H1 (cell line): ENCODE measurements at regions of chr1 and their contacts with region 1.

Region 1: GRCh38 chr1:108691942-108692723 is at the start of gene PRPF38B:
- DNase-seq: peak; percentile 78 to 91
- H3K4me3 ChIP-seq: peak within 1 kb of the TSS; percentile 72 to 99 (median 96)
- H3K27ac ChIP-seq: peak within 1 kb of the TSS; percentile 96
- H3K4me1 ChIP-seq: peaks cover 0 to 2% (median 0%) of the 10 kb centered on the region in 4 experiments; a peak in 1 of 7 replicates
- H3K27me3 ChIP-seq: no peaks in the 10 kb centered on the region; a peak in 1 of 7 replicates
- CTCF ChIP-seq: no peak
- EP300 ChIP-seq: no peak; a peak in 1 of 3 replicates
- POLR2A ChIP-seq: peak; percentile 97 to 99
- RAD21 ChIP-seq: peak in 1 of 2 experiments; percentile 13; a peak in 2 of 4 replicates
- total RNA-seq, gene PRPF38B: 46.4 and 50.6 TPM in 2 replicates

Region 2: DNA sequence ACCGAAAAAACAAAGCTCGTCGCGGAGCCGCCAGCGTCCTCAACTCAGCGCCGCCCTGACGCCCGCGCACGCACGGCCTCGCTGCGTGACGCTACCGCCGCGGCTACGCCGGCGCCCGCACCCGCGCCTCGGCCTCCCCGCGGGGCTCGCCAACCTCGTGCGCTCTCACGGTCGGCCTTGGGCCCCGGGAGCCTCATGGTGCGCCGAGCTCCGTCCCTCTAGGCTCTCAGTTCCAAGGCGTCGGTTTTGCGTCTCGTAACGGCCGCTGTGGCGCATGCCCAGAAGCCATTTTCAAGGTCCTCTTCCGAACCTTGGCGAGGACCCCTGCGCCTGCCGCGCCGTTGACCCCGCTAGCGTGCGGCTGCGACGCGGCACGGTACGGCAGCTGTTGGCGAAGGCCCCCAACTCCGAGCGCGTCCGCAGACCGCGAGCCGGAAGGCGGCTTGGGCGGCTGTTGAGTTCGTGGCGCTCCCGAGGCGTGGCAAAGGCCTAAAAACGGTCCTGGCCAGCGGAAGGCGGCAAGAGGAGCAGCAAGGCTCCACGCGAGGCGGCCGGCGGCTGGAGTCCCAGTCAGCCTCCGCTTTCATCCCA is 31.0 kb before region 1 on chr1 and contains the start of gene HENMT1:
- CTCF ChIA-PET with region 1: no interaction called
- POLR2A ChIA-PET with region 1: interaction called, 33 read pairs
- DNase-seq: peak; percentile 27 to 77
- H3K4me3 ChIP-seq: peak within 1 kb of the TSS; percentile 34 to 62 (median 48)
- H3K27ac ChIP-seq: no peak within 1 kb of the TSS
- H3K4me1 ChIP-seq: peaks cover 0 to 4% (median 0%) of the 10 kb centered on the region in 4 experiments; a peak in 1 of 7 replicates
- H3K27me3 ChIP-seq: peaks cover 0 to 12% (median 7%) of the 10 kb centered on the region in 4 experiments; a peak in 4 of 7 replicates
- CTCF ChIP-seq: no peak
- EP300 ChIP-seq: no peak
- POLR2A ChIP-seq: peak; percentile 58 to 60
- RAD21 ChIP-seq: no peak
- total RNA-seq, gene HENMT1: 5.6 TPM in 2 replicates

Region 3: DNA sequence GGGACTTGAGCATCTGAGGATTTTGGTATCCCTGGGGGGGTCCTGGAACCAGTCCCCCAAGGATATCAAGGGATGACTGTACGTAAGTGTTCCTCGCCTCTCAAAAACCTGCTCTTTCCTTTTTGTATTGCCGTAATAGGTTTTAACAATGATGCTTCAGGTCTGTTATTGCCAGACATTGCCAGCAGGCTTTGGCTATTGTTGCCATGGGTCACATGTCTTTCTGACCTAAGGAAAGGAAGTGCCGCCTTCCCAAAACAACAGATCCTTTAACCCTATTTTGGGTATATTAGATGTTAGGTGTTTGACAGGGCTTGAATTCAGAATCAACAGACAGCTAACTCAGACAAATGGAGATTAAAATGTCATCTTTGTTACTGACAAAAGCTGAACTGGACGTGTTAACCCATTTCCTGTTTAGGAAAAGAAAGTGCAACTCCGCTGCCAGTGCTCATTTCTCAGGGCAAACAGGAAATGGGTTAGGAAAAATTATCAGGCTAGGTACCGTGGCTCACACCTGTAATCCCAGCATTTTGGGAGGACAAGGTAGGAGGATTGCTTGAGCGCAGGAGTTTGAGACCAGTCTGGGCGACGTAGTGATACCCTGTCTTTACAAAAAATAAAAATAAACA is 12.4 kb before region 1 on chr1:
- CTCF ChIA-PET with region 1: no interaction called
- POLR2A ChIA-PET with region 1: interaction called, 74 read pairs
- DNase-seq: no peak
- H3K4me3 ChIP-seq: no peak overlapping the region
- H3K27ac ChIP-seq: no peak overlapping the region
- H3K4me1 ChIP-seq: peaks cover 0 to 5% (median 2%) of the 10 kb centered on the region in 4 experiments; a peak in 3 of 7 replicates
- H3K27me3 ChIP-seq: no peaks in the 10 kb centered on the region
- CTCF ChIP-seq: no peak
- EP300 ChIP-seq: no peak
- POLR2A ChIP-seq: no peak
- RAD21 ChIP-seq: no peak

Region 4: GRCh38 chr1:108708691-108709660 is 16.8 kb after region 1 on chr1:
- CTCF ChIA-PET with region 1: interaction called, 20 read pairs
- POLR2A ChIA-PET with region 1: interaction called, 79 read pairs
- DNase-seq: peak in 1 of 2 experiments; percentile 74
- H3K4me3 ChIP-seq: no peak overlapping the region
- H3K27ac ChIP-seq: no peak overlapping the region
- H3K4me1 ChIP-seq: no peaks in the 10 kb centered on the region
- H3K27me3 ChIP-seq: no peaks in the 10 kb centered on the region
- CTCF ChIP-seq: peak; percentile 59 to 85 (median 85)
- EP300 ChIP-seq: no peak
- POLR2A ChIP-seq: no peak
- RAD21 ChIP-seq: peak; percentile 51 to 69